ENCODE measurements at regions of chr19 and their contacts with region 1.

Region 1: GRCh38 chr19:3100865-3101730 is 6.9 kb downstream of the GNA11 start:
- DNase-seq: peak in 1 of 9 experiments; percentile 3
- ATAC-seq: no peak
- H3K4me3 ChIP-seq: no peak overlapping the region
- H3K4me3 Mint-ChIP-seq: no peak overlapping the region
- H3K27ac ChIP-seq: no peak overlapping the region
- H3K27ac Mint-ChIP-seq: no peak overlapping the region
- H3K4me1 ChIP-seq: peaks cover 35% of the 10 kb centered on the region
- H3K4me1 Mint-ChIP-seq: peaks cover 16% of the 10 kb centered on the region
- H3K27me3 ChIP-seq: peaks cover 0 to 18% of the 10 kb centered on the region in 2 experiments
- H3K27me3 Mint-ChIP-seq: peaks cover 5% of the 10 kb centered on the region
- CTCF ChIP-seq: no peak

Region 2: GRCh38 chr19:2775556-2776430 is 325.3 kb before region 1 on chr19:
- CTCF ChIA-PET with region 1: no interaction called
- POLR2A ChIA-PET with region 1: no interaction called
- intact Hi-C with region 1: no loop called
- DNase-seq: peak; percentile 33 to 82 (median 72)
- ATAC-seq: peak; percentile 80
- H3K4me3 ChIP-seq: peak overlapping the region; percentile 21 to 37
- H3K4me3 Mint-ChIP-seq: peak overlapping the region; percentile 84
- H3K27ac ChIP-seq: peak overlapping the region; percentile 76 to 84
- H3K27ac Mint-ChIP-seq: peak overlapping the region; percentile 99
- H3K4me1 ChIP-seq: peaks cover 16% of the 10 kb centered on the region
- H3K4me1 Mint-ChIP-seq: peaks cover 36% of the 10 kb centered on the region
- H3K27me3 ChIP-seq: no peaks in the 10 kb centered on the region
- H3K27me3 Mint-ChIP-seq: no peaks in the 10 kb centered on the region
- CTCF ChIP-seq: no peak

Region 3: DNA sequence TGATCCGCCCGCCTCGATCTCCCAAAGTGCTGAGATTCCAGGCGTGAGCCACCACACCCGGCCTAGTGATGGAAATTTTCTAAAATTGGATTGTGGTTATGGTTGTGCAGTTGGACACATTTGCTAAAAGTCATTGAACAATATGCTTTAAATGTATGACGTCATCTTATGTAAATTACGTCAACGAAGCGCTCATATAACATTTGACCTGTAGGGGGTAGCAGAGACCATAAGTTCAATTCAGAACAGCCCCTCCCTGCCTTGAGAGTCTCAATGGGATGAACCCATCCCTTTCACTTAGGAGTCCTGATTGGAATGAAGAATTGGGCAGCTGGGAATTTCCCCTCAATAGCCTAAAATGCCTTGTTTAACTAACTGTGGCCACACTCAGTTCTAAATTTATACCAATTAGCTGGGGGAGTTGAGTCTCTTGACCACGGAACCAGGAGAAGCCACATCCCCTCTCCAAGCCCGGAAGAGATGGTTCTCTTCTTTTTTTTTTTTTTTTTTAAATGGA is 139.0 kb before region 1 on chr19:
- CTCF ChIA-PET with region 1: interaction called, 117 read pairs
- POLR2A ChIA-PET with region 1: no interaction called
- intact Hi-C with region 1: loop called (anchors 1 kb)
- DNase-seq: peak in 8 of 9 experiments; percentile 19 to 91 (median 54)
- ATAC-seq: peak; percentile 98
- H3K4me3 ChIP-seq: no peak overlapping the region
- H3K4me3 Mint-ChIP-seq: no peak overlapping the region
- H3K27ac ChIP-seq: no peak overlapping the region
- H3K27ac Mint-ChIP-seq: no peak overlapping the region
- H3K4me1 ChIP-seq: no peaks in the 10 kb centered on the region
- H3K4me1 Mint-ChIP-seq: peaks cover 4% of the 10 kb centered on the region
- H3K27me3 ChIP-seq: no peaks in the 10 kb centered on the region
- H3K27me3 Mint-ChIP-seq: no peaks in the 10 kb centered on the region
- CTCF ChIP-seq: peak; percentile 78

Region 4: GRCh38 chr19:2969104-2969504 is 132.0 kb before region 1 on chr19:
- CTCF ChIA-PET with region 1: interaction called, 58 read pairs
- POLR2A ChIA-PET with region 1: no interaction called
- intact Hi-C with region 1: no loop called
- DNase-seq: no peak
- ATAC-seq: no peak
- H3K4me3 ChIP-seq: no peak overlapping the region
- H3K4me3 Mint-ChIP-seq: no peak overlapping the region
- H3K27ac ChIP-seq: no peak overlapping the region
- H3K27ac Mint-ChIP-seq: no peak overlapping the region
- H3K4me1 ChIP-seq: peaks cover 5% of the 10 kb centered on the region
- H3K4me1 Mint-ChIP-seq: no peaks in the 10 kb centered on the region
- H3K27me3 ChIP-seq: no peaks in the 10 kb centered on the region
- H3K27me3 Mint-ChIP-seq: no peaks in the 10 kb centered on the region
- CTCF ChIP-seq: no peak

Region 5: GRCh38 chr19:2977001-2977685 is 124.0 kb before region 1 on chr19 and contains the start of gene TLE6:
- CTCF ChIA-PET with region 1: interaction called, 11 read pairs
- POLR2A ChIA-PET with region 1: no interaction called
- intact Hi-C with region 1: no loop called
- DNase-seq: peak; percentile 87 to 96 (median 93)
- ATAC-seq: peak; percentile 99
- H3K4me3 ChIP-seq: peak within 1 kb of the TSS; percentile 67 to 84
- H3K4me3 Mint-ChIP-seq: peak within 1 kb of the TSS; percentile 93
- H3K27ac ChIP-seq: no peak within 1 kb of the TSS
- H3K27ac Mint-ChIP-seq: peak within 1 kb of the TSS; percentile 52
- H3K4me1 ChIP-seq: peaks cover 12% of the 10 kb centered on the region
- H3K4me1 Mint-ChIP-seq: peaks cover 16% of the 10 kb centered on the region
- H3K27me3 ChIP-seq: no peaks in the 10 kb centered on the region
- H3K27me3 Mint-ChIP-seq: peaks cover 6% of the 10 kb centered on the region
- CTCF ChIP-seq: no peak
- total RNA-seq, gene TLE6: not detected

Region 6: DNA sequence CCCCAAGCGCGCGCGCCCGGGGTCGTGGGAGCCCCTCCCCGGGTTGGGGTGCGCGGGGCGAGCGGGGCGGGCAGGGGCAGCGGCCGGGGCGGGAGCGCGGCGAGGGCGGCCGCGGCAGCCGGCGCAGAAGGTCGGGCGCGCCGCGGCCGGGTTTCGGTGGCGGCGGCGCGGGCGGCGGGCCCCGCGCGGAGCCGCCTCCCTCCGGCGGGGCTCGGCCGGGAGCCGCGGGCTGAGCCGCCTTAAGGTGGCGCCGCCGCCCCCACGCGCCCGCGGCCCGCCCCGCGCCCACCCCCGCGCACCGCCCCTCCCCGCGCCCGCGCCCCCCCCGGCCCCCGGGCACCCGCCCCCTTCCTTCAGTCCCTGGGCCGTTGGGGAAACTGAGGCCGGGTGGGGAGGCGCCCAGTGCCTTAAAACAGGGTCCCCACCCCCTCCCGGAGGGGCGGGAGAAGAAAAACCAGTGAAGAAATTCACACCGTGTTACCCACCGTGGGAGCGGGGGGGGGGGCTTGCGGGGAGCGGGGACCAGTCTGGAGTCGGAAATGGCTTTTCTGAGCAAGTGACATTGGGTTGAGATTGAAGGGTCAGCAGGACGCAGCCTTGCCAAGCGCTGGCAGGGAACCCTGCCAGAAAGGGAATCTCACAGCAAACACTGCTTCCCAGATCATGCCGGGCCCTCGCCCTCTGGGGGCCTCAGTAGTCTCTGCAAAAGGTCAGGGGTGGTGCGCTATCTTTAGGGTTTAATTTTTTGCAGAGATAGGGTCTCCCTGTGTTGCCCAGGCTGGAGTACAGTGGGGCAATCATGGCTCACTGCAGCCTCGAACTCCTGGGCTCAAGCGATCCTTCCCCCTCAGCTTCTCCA is 71.8 kb before region 1 on chr19 and contains the start of gene TLE2:
- CTCF ChIA-PET with region 1: interaction called, 10 read pairs
- POLR2A ChIA-PET with region 1: no interaction called
- intact Hi-C with region 1: no loop called
- DNase-seq: peak in 2 of 9 experiments; percentile 58 to 63
- ATAC-seq: peak; percentile 69
- H3K4me3 ChIP-seq: peak within 1 kb of the TSS; percentile 57 to 60
- H3K4me3 Mint-ChIP-seq: peak within 1 kb of the TSS; percentile 82
- H3K27ac ChIP-seq: peak within 1 kb of the TSS in 1 of 2 experiments; percentile 37
- H3K27ac Mint-ChIP-seq: peak within 1 kb of the TSS; percentile 67
- H3K4me1 ChIP-seq: peaks cover 31% of the 10 kb centered on the region
- H3K4me1 Mint-ChIP-seq: peaks cover 27% of the 10 kb centered on the region
- H3K27me3 ChIP-seq: no peaks in the 10 kb centered on the region
- H3K27me3 Mint-ChIP-seq: no peaks in the 10 kb centered on the region
- CTCF ChIP-seq: no peak
- total RNA-seq, gene TLE2: 12.1 to 15.4 TPM

Region 7: GRCh38 chr19:3068071-3068470 is 33.0 kb before region 1 on chr19:
- CTCF ChIA-PET with region 1: interaction called, 229 read pairs
- POLR2A ChIA-PET with region 1: no interaction called
- intact Hi-C with region 1: no loop called
- DNase-seq: no peak
- ATAC-seq: no peak
- H3K4me3 ChIP-seq: no peak overlapping the region
- H3K4me3 Mint-ChIP-seq: no peak overlapping the region
- H3K27ac ChIP-seq: no peak overlapping the region
- H3K27ac Mint-ChIP-seq: no peak overlapping the region
- H3K4me1 ChIP-seq: peaks cover 16% of the 10 kb centered on the region
- H3K4me1 Mint-ChIP-seq: peaks cover 6% of the 10 kb centered on the region
- H3K27me3 ChIP-seq: no peaks in the 10 kb centered on the region
- H3K27me3 Mint-ChIP-seq: no peaks in the 10 kb centered on the region
- CTCF ChIP-seq: no peak

Region 8: GRCh38 chr19:3075895-3076431 is 25.1 kb before region 1 on chr19:
- CTCF ChIA-PET with region 1: interaction called, 229 read pairs
- POLR2A ChIA-PET with region 1: interaction called, 3 read pairs
- intact Hi-C with region 1: loop called (anchors 1 kb)
- DNase-seq: peak; percentile 58 to 89 (median 79)
- ATAC-seq: peak; percentile 100
- H3K4me3 ChIP-seq: no peak overlapping the region
- H3K4me3 Mint-ChIP-seq: no peak overlapping the region
- H3K27ac ChIP-seq: no peak overlapping the region
- H3K27ac Mint-ChIP-seq: no peak overlapping the region
- H3K4me1 ChIP-seq: peaks cover 10% of the 10 kb centered on the region
- H3K4me1 Mint-ChIP-seq: peaks cover 2% of the 10 kb centered on the region
- H3K27me3 ChIP-seq: no peaks in the 10 kb centered on the region
- H3K27me3 Mint-ChIP-seq: no peaks in the 10 kb centered on the region
- CTCF ChIP-seq: peak; percentile 85

Region 9: DNA sequence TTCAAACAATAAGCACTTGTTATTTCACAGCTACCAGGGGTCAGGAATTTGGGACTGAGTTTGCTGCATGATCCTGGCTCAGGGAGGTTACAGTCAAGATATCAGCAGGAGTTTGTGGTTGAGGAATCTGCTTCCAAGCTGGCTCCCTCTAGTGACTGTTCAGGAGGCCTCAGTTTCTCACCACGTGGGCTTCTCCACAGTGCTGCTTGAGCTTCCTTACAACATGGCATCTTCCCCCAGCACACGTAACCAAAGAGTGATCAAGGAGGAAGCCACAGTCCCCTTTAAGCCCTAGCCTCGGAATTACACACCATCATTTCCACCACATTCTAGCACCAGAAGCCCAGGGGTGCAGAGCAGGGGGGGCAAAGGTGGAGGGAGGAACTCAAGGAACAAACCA is 152.2 kb after region 1 on chr19:
- CTCF ChIA-PET with region 1: no interaction called
- POLR2A ChIA-PET with region 1: no interaction called
- intact Hi-C with region 1: no loop called
- DNase-seq: no peak
- ATAC-seq: no peak
- H3K4me3 ChIP-seq: no peak overlapping the region
- H3K4me3 Mint-ChIP-seq: no peak overlapping the region
- H3K27ac ChIP-seq: no peak overlapping the region
- H3K27ac Mint-ChIP-seq: no peak overlapping the region
- H3K4me1 ChIP-seq: no peaks in the 10 kb centered on the region
- H3K4me1 Mint-ChIP-seq: no peaks in the 10 kb centered on the region
- H3K27me3 ChIP-seq: peaks cover 0 to 3% of the 10 kb centered on the region in 2 experiments
- H3K27me3 Mint-ChIP-seq: peaks cover 17% of the 10 kb centered on the region
- CTCF ChIP-seq: no peak